Ascending aorta (tissue), 2 donors: ENCODE measurements at regions of chr4 and their contacts with region 1.

Region 1: DNA sequence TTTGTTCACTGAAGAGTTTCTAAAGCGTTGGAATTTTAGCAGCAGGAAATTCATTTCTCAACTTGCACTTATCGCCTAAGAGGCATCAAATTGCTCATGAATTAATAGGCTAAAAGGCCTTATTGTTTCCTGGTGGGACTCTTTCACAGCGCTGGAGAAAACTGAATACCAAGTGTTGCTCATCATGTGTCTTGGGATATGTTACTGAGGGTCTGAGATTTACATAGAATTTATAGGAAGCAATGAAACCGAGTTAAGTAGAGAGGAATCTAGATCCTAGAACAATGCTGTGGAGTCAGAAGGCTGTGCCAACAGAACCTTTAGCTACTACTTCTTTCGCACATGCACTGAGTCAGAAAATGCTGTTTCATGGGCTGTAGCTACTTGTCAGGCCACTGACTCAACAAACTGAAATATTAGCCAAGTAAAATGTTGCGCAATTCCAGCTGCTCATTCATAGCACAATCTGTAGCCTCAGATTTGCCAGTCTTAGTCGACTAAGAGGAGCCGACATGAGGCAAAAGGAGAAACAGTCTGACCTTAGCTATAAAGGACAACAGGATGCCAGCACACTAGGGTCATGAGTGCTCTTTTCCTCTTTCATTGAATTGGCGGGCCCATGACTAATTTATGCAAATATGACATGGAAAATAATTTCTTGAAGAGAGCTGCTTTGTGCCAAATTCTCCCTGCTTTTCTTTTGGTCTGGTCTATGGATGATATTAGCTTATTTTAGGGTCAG is 35.9 kb upstream of the CXCL8 start:
- DNase-seq: peak; percentile 72 to 93
- H3K4me3 ChIP-seq: no peak overlapping the region
- H3K27ac ChIP-seq: peak overlapping the region; percentile 67 to 83
- H3K4me1 ChIP-seq: peaks cover 0 to 16% of the 10 kb centered on the region in 2 donors
- H3K27me3 ChIP-seq: no peaks in the 10 kb centered on the region
- CTCF ChIP-seq: no peak

Region 2: GRCh38 chr4:73631565-73632226 is 72.8 kb before region 1 on chr4:
- intact Hi-C with region 1: no loop called
- DNase-seq: no peak
- H3K4me3 ChIP-seq: no peak overlapping the region
- H3K27ac ChIP-seq: no peak overlapping the region
- H3K4me1 ChIP-seq: no peaks in the 10 kb centered on the region
- H3K27me3 ChIP-seq: no peaks in the 10 kb centered on the region
- CTCF ChIP-seq: no peak

Region 3: DNA sequence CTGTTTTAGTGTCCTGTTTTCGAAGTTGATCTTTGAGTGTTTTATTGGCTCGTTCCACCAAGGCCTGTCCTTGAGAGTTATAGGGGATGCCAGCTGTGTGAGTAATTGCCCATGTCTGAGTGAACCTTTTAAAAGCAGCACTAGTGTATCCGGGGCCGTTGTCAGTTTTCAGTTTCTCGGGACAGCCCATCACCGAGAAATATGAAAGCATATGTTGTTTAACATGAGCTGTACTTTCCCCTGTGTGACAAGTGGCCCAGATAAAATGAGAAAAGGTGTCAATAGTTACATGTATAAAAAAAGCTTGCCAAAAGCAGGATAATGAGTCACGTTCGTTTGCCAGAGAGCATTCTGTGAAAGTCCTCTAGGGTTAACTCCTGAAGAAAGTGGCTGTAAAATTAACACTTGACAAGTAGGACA is 35.7 kb before region 1 on chr4:
- intact Hi-C with region 1: loop called (anchors 5 kb)
- DNase-seq: no peak
- H3K4me3 ChIP-seq: peak overlapping the region; percentile 25 to 44
- H3K27ac ChIP-seq: peak overlapping the region in 1 of 2 donors; percentile 28
- H3K4me1 ChIP-seq: peaks cover 0 to 6% of the 10 kb centered on the region in 2 donors
- H3K27me3 ChIP-seq: no peaks in the 10 kb centered on the region
- CTCF ChIP-seq: no peak

Region 4: DNA sequence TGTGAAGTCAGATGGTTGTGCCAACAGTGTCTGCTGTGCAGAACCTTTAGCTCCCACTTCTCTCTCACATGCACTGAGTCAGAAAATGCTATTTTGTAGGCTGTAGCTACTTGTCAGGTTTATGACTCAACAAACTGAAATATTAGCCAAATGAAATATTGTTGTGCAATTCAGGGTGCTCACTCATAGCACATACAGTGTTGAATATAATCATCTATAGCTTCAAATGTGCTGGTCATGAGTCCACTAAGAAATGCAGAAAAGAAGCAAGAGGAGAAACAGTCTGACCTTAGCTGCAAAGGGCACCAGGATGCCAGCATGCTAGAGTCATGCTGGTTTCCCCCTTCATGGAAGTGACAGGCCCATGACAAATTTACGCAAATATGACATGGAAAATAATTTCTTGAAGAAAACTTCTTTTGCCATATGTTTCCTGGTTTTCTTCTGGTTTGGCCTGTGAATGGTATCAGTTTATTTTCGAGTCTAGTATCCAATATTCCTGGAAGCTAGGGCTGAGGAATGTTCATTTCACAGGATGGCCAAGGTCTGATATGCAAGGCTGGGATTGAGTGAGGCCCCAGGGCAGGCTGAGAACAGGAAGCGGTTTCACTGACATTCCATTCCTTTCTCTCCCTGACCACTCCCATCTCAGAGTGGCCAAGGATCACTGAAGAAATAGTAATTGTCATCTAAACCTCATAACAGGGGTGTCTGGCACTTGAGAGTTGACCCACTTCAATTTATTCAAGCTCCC is 404.8 kb after region 1 on chr4:
- intact Hi-C with region 1: loop called (anchors 5 kb)
- DNase-seq: no peak
- H3K4me3 ChIP-seq: no peak overlapping the region
- H3K27ac ChIP-seq: peak overlapping the region; percentile 78 to 84
- H3K4me1 ChIP-seq: peaks cover 11 to 53% of the 10 kb centered on the region in 2 donors
- H3K27me3 ChIP-seq: no peaks in the 10 kb centered on the region
- CTCF ChIP-seq: no peak